CD8-positive, alpha-beta T cell (primary cell): ENCODE measurements at regions of chr3 and their contacts with region 1.

Region 1: GRCh38 chr3:153043729-153044328 is 118.2 kb upstream of the RAP2B start:
- DNase-seq: no peak
- ATAC-seq: no peak
- H3K4me3 ChIP-seq: no peak overlapping the region
- H3K4me3 Mint-ChIP-seq: no peak overlapping the region
- H3K27ac ChIP-seq: no peak overlapping the region
- H3K27ac Mint-ChIP-seq: no peak overlapping the region
- H3K4me1 ChIP-seq: no peaks in the 10 kb centered on the region
- H3K4me1 Mint-ChIP-seq: peaks cover 2% of the 10 kb centered on the region
- H3K27me3 ChIP-seq: no peaks in the 10 kb centered on the region
- H3K27me3 Mint-ChIP-seq: peaks cover 5% of the 10 kb centered on the region
- CTCF ChIP-seq: no peak

Region 2: DNA sequence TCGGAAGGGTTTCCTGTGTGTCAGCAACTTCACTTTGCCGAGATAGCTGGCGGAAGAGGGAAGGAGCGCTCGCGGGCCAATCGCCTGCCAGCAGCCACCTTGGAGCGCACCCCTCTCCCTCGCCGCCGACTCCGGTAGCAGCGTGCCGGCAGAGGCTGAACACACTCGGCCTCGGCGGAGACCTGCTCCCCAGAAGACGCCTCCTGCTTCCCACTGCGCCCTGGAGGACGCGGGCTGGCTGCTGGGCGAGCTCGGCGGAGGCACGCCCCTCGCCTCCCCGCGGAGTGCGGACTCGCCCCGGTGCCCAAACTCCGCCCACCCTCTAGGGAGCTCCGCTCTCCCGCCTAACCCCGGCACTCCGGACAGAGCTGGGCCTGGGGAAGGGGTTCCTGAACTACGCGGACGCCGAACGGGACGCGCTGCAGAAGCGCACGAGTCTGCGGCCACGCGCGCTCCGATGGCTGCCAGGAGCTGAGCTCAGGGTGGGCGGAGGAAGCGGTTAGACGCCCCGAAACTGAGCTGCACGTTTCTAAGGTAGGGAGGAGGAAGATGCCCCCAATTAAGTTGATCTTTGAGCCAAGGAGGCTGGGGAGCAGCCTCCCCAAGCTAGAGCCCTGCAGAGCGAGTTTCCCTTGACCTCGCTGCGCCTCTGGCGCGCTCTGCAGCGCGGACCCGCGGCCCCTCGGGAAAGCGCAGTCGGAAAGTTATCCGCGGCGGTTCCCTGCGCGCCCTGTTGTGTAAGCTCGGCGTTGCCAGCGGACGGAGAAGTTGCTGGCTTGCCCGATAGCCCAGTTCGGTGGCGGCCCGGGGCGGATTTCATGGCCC is 208.8 kb before region 1 on chr3 and contains the start of gene P2RY1:
- CTCF ChIA-PET with region 1: no interaction called
- POLR2A ChIA-PET with region 1: no interaction called
- intact Hi-C with region 1: no loop called
- DNase-seq: peak in 2 of 9 experiments; percentile 5 to 18
- ATAC-seq: no peak
- H3K4me3 ChIP-seq: peak within 1 kb of the TSS in 1 of 2 experiments; percentile 36
- H3K4me3 Mint-ChIP-seq: peak within 1 kb of the TSS; percentile 74
- H3K27ac ChIP-seq: no peak within 1 kb of the TSS
- H3K27ac Mint-ChIP-seq: no peak within 1 kb of the TSS
- H3K4me1 ChIP-seq: no peaks in the 10 kb centered on the region
- H3K4me1 Mint-ChIP-seq: peaks cover 15% of the 10 kb centered on the region
- H3K27me3 ChIP-seq: no peaks in the 10 kb centered on the region
- H3K27me3 Mint-ChIP-seq: peaks cover 29% of the 10 kb centered on the region
- CTCF ChIP-seq: no peak
- total RNA-seq, gene P2RY1: 0.06 TPM in 1 of 2 experiments, not detected in the other

Region 3: GRCh38 chr3:153463895-153464294 is 420.1 kb after region 1 on chr3:
- CTCF ChIA-PET with region 1: no interaction called
- POLR2A ChIA-PET with region 1: no interaction called
- intact Hi-C with region 1: loop called in 1 of 2 experiments (anchors 10 kb)
- DNase-seq: no peak
- ATAC-seq: no peak
- H3K4me3 ChIP-seq: no peak overlapping the region
- H3K4me3 Mint-ChIP-seq: no peak overlapping the region
- H3K27ac ChIP-seq: no peak overlapping the region
- H3K27ac Mint-ChIP-seq: no peak overlapping the region
- H3K4me1 ChIP-seq: peaks cover 14% of the 10 kb centered on the region
- H3K4me1 Mint-ChIP-seq: peaks cover 39% of the 10 kb centered on the region
- H3K27me3 ChIP-seq: no peaks in the 10 kb centered on the region
- H3K27me3 Mint-ChIP-seq: no peaks in the 10 kb centered on the region
- CTCF ChIP-seq: no peak

Region 4: GRCh38 chr3:153679714-153680113 is 635.9 kb after region 1 on chr3:
- CTCF ChIA-PET with region 1: interaction called, 3 read pairs
- POLR2A ChIA-PET with region 1: no interaction called
- intact Hi-C with region 1: loop called in 1 of 2 experiments (anchors 10 kb)
- DNase-seq: no peak
- ATAC-seq: no peak
- H3K4me3 ChIP-seq: no peak overlapping the region
- H3K4me3 Mint-ChIP-seq: no peak overlapping the region
- H3K27ac ChIP-seq: no peak overlapping the region
- H3K27ac Mint-ChIP-seq: no peak overlapping the region
- H3K4me1 ChIP-seq: no peaks in the 10 kb centered on the region
- H3K4me1 Mint-ChIP-seq: peaks cover 11% of the 10 kb centered on the region
- H3K27me3 ChIP-seq: no peaks in the 10 kb centered on the region
- H3K27me3 Mint-ChIP-seq: no peaks in the 10 kb centered on the region
- CTCF ChIP-seq: no peak

Region 5: DNA sequence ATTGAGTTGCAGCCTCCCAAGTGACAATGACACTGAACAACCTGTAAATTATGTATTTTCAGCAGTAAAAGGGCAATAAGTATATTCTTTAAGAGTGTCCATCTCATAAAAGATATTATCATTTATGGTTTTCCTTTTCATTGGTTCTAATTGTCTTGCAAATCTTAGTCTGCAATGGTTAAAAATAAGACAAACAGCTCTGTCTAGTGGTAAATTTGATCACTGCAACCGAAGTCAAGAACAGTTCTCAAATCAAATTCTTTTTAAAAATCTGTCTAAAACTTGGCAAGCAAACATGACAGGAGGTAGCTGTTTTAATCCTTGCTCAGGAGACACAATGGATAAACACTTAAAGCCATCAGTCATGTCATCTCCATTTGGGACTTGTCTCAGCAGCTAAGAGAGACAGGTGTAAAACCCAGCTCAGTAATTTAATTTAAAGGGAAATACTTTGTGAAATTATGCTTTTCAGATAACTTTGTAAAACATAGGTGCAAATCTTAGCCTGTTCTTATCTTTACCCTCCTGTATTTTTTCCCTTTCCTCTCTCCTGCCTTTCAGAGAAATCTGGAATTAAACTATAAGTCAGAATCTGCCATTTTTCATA is 927.0 kb after region 1 on chr3:
- CTCF ChIA-PET with region 1: no interaction called
- POLR2A ChIA-PET with region 1: no interaction called
- intact Hi-C with region 1: loop called in 1 of 2 experiments (anchors 5 kb)
- DNase-seq: peak in 1 of 9 experiments; percentile 3
- ATAC-seq: no peak
- H3K4me3 ChIP-seq: no peak overlapping the region
- H3K4me3 Mint-ChIP-seq: no peak overlapping the region
- H3K27ac ChIP-seq: no peak overlapping the region
- H3K27ac Mint-ChIP-seq: no peak overlapping the region
- H3K4me1 ChIP-seq: no peaks in the 10 kb centered on the region
- H3K4me1 Mint-ChIP-seq: no peaks in the 10 kb centered on the region
- H3K27me3 ChIP-seq: no peaks in the 10 kb centered on the region
- H3K27me3 Mint-ChIP-seq: peaks cover 16% of the 10 kb centered on the region
- CTCF ChIP-seq: no peak

Region 6: DNA sequence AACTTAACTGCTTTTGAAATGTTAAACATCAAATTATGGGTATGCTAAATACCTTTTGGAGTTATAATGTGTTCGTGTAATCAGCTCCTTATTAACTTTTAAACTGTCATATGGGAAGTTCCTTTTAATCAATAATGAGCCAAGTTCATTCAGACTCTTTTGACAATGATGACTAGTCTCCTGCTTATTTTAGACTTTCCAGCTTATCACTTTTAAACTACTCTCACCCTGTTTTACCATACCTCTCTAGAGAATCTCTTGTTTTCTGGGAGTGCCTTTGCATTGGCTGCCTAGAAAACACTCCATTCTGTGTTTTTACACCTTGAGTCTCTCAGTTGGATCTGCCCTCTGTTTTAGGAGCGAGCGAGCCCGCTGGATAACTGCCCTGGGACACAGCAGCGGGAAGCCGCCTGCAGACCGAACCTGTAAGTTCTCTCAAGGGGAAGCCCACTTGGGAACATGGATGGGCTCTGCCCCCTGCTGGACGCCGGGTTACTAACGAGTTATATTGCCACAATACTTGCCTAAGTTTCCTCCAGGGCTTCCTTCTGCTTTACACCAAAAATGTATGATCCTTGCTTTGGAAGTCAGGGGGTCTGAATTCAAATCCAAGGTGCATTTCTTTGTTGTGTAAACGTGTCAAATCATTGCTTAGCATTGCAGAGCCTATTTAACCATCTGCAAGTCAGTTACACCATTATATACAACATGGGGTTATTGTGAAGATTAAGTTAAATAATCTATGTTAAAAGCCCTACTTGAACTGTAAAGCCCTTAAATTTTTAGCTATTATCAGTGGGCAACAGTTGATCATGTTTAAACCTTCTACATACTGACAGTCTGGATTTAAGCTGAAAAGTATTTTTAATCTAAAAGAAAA is 1209.2 kb after region 1 on chr3:
- CTCF ChIA-PET with region 1: interaction called, 3 read pairs
- POLR2A ChIA-PET with region 1: no interaction called
- intact Hi-C with region 1: loop called (anchors 2 to 5 kb)
- DNase-seq: peak; percentile 35 to 70 (median 60)
- ATAC-seq: no peak
- H3K4me3 ChIP-seq: no peak overlapping the region
- H3K4me3 Mint-ChIP-seq: no peak overlapping the region
- H3K27ac ChIP-seq: no peak overlapping the region
- H3K27ac Mint-ChIP-seq: no peak overlapping the region
- H3K4me1 ChIP-seq: no peaks in the 10 kb centered on the region
- H3K4me1 Mint-ChIP-seq: peaks cover 2% of the 10 kb centered on the region
- H3K27me3 ChIP-seq: no peaks in the 10 kb centered on the region
- H3K27me3 Mint-ChIP-seq: no peaks in the 10 kb centered on the region
- CTCF ChIP-seq: peak; percentile 60